Sciatic nerve (tissue), 2 donors: ENCODE measurements at regions of chr6 and their contacts with region 1.

Region 1: GRCh38 chr6:26097268-26097875 is 10.1 kb downstream of the HFE start:
- DNase-seq: peak; percentile 75
- ATAC-seq: peak; percentile 85

Region 2: DNA sequence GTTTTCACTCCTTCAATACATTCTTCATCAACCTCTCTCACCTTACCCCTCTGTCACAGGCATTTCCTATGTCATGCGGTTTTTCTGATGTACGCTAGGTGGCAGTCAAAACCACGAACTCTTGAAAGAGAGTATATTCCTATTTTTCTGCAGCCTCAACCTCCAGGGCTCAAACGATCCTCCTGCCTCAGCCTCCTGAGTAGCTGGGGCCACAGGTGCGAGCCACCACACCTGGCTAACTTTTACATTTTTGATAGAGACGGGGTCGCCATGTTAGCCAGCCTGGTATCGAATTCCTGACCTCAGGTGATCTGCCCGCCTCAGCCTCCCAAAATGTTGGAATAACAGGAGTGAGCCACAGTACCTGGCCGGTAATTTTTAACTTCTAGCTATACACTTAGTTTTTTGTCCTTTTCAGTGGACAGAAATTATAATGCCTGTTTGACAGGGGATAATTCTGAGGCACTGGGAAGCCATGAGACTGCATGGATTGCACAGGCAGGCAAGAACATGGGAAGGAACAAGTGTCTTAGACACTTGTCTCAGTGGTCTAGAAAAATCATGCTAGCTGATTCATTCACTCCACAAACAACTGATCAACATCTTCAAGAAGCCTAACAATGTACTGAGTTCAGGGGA is 32.6 kb before region 1 on chr6:
- intact Hi-C with region 1: loop called (anchors 5 kb)
- DNase-seq: no peak
- ATAC-seq: peak; percentile 81

Region 3: GRCh38 chr6:27359231-27359630 is 1261.9 kb after region 1 on chr6:
- intact Hi-C with region 1: no loop called
- DNase-seq: no peak
- ATAC-seq: no peak